ENCODE measurements at regions of chr2 and their contacts with region 1.

Region 1: GRCh38 chr2:59012249-59012648 is 771.1 kb upstream of the FANCL start:
- DNase-seq: no peak
- ATAC-seq: no peak
- H3K4me3 ChIP-seq: no peak overlapping the region
- H3K27ac ChIP-seq: no peak overlapping the region
- H3K4me1 ChIP-seq: no peaks in the 10 kb centered on the region
- H3K27me3 ChIP-seq: peaks cover 19% of the 10 kb centered on the region
- CTCF ChIP-seq: no peak

Region 2: GRCh38 chr2:58967736-58968135 is 44.5 kb before region 1 on chr2:
- CTCF ChIA-PET with region 1: no interaction called
- POLR2A ChIA-PET with region 1: interaction called, 12 read pairs
- intact Hi-C with region 1: no loop called
- DNase-seq: peak; percentile 19
- ATAC-seq: no peak
- H3K4me3 ChIP-seq: no peak overlapping the region
- H3K27ac ChIP-seq: no peak overlapping the region
- H3K4me1 ChIP-seq: no peaks in the 10 kb centered on the region
- H3K27me3 ChIP-seq: peaks cover 63% of the 10 kb centered on the region
- CTCF ChIP-seq: no peak

Measured in PC-3 (cell line).